ENCODE measurements at regions of chr6 and their contacts with region 1.

Region 1: DNA sequence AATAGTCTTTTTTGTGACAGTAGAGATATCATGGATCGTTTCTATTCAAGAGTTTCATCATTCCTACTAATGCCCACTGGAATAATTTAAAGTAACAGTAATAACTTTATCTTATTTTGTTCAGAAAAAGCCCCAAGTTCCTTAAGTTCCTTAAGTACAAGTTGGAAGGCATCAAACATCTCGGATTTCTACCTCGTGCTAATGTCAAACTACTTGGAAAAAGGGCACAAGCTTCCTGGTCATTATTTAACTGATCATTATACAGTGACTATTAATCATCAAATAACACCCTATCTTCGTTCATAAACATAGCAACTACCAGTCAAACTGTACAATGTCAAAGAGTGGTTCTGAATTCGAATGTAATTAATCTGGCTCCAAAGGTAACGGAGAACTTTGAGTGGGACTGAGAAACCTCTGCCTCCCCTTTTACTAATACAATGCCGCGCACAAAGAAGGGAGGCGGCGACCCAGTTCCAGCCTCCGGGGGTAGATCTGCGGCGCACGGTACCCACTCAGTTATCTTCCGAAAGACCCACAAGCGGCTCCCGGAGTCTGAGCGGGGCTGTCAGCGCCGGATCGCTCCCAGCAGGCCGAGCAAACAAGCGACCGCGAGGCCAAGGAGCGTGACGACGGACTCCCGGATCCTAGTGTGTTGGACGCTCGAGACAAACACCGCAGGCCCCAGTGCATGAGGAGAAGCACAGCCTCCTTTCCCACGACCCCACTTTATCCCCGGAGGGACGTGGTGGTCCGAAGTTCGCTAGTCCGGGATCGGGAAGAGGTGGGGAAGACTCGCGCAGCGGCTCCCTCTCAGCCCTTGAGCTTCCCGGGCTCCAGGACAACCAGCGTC is 716 bp downstream of the SHPRH start:
- DNase-seq: peak; percentile 68
- H3K4me3 ChIP-seq: peak overlapping the region; percentile 73 to 78 (median 77)
- H3K27ac ChIP-seq: peak overlapping the region; percentile 66
- H3K4me1 ChIP-seq: peaks cover 11% of the 10 kb centered on the region
- H3K27me3 ChIP-seq: no peaks in the 10 kb centered on the region
- CTCF ChIP-seq: no peak
- POLR2A ChIP-seq: no peak

Region 2: GRCh38 chr6:145734486-145735355 is 228.7 kb before region 1 on chr6:
- CTCF ChIA-PET with region 1: no interaction called
- POLR2A ChIA-PET with region 1: no interaction called
- dilution Hi-C with region 1: no loop called
- intact Hi-C with region 1: loop called (anchors 1 kb)
- DNase-seq: peak; percentile 89
- H3K4me3 ChIP-seq: peak overlapping the region; percentile 51 to 60 (median 56)
- H3K27ac ChIP-seq: peak overlapping the region; percentile 87
- H3K4me1 ChIP-seq: peaks cover 18% of the 10 kb centered on the region
- H3K27me3 ChIP-seq: no peaks in the 10 kb centered on the region
- CTCF ChIP-seq: no peak
- POLR2A ChIP-seq: peak; percentile 91

Region 3: DNA sequence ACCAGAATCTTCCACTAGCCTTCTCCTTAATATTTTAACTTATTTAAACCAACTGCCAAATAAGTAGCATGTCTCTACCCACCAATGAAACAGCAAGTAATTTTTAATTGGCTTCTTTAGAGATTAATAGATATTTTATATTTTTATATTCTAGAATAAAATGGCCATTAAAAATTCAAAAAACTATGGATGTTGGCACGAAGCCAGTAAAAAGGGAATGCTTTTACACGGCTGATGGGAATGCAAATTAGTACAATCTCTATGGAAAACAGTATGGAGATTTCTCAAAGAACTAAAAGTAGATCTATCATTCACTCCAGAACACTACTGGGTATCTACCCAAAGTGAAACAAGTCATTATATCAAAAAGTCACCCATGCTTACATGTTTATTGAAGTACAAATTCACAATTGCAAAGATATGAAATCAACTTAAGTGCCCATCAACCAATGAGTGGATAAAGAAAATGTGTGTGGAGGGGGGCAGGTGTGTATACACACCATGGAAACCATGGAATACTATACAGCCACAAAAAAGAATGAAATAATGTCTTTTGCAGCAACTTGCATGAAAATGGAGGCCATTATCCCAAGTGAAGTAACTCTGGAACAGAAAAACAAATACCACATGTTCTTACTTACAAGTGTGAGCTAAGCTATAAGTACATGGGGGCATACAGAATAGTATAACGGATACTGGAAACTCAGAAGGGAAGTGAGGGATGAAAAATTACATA is 14.4 kb before region 1 on chr6:
- CTCF ChIA-PET with region 1: no interaction called
- POLR2A ChIA-PET with region 1: no interaction called
- dilution Hi-C with region 1: no loop called
- intact Hi-C with region 1: no loop called
- DNase-seq: no peak
- H3K4me3 ChIP-seq: no peak overlapping the region
- H3K27ac ChIP-seq: no peak overlapping the region
- H3K4me1 ChIP-seq: no peaks in the 10 kb centered on the region
- H3K27me3 ChIP-seq: no peaks in the 10 kb centered on the region
- CTCF ChIP-seq: no peak
- POLR2A ChIP-seq: no peak

Region 4: DNA sequence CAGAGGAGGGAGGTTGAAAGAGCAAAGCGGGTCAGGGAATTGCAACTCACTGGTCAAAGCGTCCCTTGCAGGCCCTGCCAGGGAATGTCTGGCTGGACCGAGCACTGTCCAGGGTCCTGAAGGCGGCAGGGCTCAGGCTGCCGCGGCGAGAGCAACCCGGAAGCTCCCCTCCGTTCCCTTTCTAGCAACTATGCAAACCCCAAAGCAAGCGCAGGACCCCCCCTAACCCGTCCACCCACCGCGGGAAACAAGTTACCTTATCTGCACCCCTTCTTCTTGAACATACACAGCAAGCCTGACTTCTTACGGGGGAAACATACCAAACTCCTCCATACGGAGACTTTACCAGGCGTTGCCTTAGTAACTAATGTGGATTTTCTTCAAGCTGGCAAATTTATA is 64.8 kb after region 1 on chr6:
- CTCF ChIA-PET with region 1: no interaction called
- POLR2A ChIA-PET with region 1: no interaction called
- dilution Hi-C with region 1: no loop called
- intact Hi-C with region 1: loop called (anchors 2 kb)
- DNase-seq: peak; percentile 52
- H3K4me3 ChIP-seq: no peak overlapping the region
- H3K27ac ChIP-seq: no peak overlapping the region
- H3K4me1 ChIP-seq: no peaks in the 10 kb centered on the region
- H3K27me3 ChIP-seq: peaks cover 19 to 20% of the 10 kb centered on the region in 2 experiments
- CTCF ChIP-seq: no peak
- POLR2A ChIP-seq: no peak

Region 5: GRCh38 chr6:146700078-146700686 is 736.7 kb after region 1 on chr6:
- CTCF ChIA-PET with region 1: interaction called, 7 read pairs
- POLR2A ChIA-PET with region 1: no interaction called
- dilution Hi-C with region 1: no loop called
- intact Hi-C with region 1: loop called (anchors 1 kb)
- DNase-seq: peak; percentile 78
- H3K4me3 ChIP-seq: no peak overlapping the region
- H3K27ac ChIP-seq: no peak overlapping the region
- H3K4me1 ChIP-seq: no peaks in the 10 kb centered on the region
- H3K27me3 ChIP-seq: peaks cover 0 to 3% of the 10 kb centered on the region in 2 experiments
- CTCF ChIP-seq: peak; percentile 44 to 52
- POLR2A ChIP-seq: no peak

Region 6: DNA sequence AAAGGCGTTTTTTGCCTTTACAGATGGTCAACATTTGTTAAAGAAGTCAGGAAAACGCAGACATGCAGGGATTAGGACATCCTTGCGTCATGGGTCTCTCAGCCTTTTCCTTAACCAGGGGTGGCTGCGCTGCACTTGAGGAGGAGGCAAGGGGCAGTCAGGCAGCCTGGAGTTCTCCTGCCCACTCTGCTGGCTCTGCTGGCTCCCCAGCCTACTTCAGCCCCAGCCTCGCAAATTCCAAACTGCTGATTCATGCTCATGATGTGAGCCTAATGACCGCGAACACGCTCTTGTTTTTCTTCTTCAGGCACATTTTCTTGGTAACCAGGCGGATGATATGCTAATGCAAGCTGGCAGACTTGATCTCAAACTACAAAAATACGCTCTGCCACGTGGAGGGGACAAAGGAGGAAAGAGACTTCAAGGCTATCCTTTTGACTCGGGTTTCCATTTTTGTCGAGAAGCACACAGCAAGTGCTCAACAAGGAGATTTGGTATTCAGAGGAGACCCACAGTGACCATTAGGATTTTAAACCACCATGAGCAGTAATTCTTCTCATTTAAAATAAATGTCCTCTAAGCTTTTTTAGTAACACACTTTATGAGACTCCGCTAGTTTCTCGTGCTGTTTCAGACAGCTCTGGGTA is 950.5 kb after region 1 on chr6:
- CTCF ChIA-PET with region 1: no interaction called
- POLR2A ChIA-PET with region 1: no interaction called
- dilution Hi-C with region 1: no loop called
- intact Hi-C with region 1: loop called (anchors 1 kb)
- DNase-seq: peak; percentile 98
- H3K4me3 ChIP-seq: peak overlapping the region in 2 of 3 experiments; percentile 10 to 45
- H3K27ac ChIP-seq: peak overlapping the region; percentile 99
- H3K4me1 ChIP-seq: peaks cover 39% of the 10 kb centered on the region
- H3K27me3 ChIP-seq: no peaks in the 10 kb centered on the region
- CTCF ChIP-seq: no peak
- POLR2A ChIP-seq: no peak

Measured in endothelial cell of umbilical vein (primary cell).